Activated B cell treated with CpG ODN at 0.5 μM for 24 hours (primary cell): ENCODE measurements at regions of chr22 and their contacts with region 1.

Region 1: GRCh38 chr22:37199103-37199759 is 11.2 kb upstream of the C1QTNF6 start:
- DNase-seq: peak; percentile 99
- ATAC-seq: peak; percentile 97
- H3K4me3 Mint-ChIP-seq: peak overlapping the region; percentile 87
- H3K27ac Mint-ChIP-seq: peak overlapping the region; percentile 94
- H3K4me1 Mint-ChIP-seq: peaks cover 28% of the 10 kb centered on the region
- H3K27me3 Mint-ChIP-seq: no peaks in the 10 kb centered on the region
- CTCF ChIP-seq: peak; percentile 22

Region 2: DNA sequence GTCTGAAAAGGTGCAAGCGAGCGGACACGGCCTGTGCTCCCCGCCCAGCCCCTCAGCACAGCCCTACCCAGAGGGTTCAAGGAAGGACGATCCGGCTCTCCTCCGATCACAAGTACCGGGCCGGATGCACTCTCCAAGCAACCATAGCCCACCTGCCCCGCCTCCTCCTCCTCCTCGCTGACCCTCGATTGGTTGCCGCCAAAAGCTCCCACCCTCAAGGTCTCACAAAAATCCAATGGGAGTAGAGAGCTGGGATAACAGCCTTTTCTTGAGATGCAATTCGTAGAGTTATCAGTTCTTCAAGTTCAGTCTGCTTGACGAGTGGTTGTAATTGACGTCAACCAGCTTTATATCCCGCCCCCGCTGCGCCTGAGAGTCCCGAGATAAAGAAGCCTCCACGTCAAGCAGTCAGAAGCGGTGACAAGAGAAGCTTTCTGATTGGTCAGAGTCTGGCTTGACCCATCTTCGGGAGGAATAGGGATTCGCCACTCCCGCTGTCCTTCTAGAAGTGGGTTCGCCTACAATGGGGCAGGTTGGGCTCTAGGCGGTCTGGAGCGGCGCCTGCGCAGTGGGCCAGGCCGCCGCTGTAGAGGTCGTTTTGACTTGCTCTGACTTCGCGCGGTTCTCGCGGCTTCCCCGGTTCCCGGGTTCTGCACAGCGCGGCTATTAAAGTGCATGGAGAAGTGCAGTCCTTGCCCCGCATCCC is 423.1 kb before region 1 on chr22 and contains the start of gene IFT27:
- CTCF ChIA-PET with region 1: interaction called, 5 read pairs
- POLR2A ChIA-PET with region 1: no interaction called
- intact Hi-C with region 1: loop called (anchors 1 kb)
- DNase-seq: peak; percentile 81
- ATAC-seq: peak; percentile 89
- H3K4me3 Mint-ChIP-seq: peak within 1 kb of the TSS; percentile 88
- H3K27ac Mint-ChIP-seq: peak within 1 kb of the TSS; percentile 89
- H3K4me1 Mint-ChIP-seq: peaks cover 14% of the 10 kb centered on the region
- H3K27me3 Mint-ChIP-seq: no peaks in the 10 kb centered on the region
- CTCF ChIP-seq: no peak
- total RNA-seq, gene IFT27: 26.2 and 32.7 TPM in 2 replicates

Region 3: DNA sequence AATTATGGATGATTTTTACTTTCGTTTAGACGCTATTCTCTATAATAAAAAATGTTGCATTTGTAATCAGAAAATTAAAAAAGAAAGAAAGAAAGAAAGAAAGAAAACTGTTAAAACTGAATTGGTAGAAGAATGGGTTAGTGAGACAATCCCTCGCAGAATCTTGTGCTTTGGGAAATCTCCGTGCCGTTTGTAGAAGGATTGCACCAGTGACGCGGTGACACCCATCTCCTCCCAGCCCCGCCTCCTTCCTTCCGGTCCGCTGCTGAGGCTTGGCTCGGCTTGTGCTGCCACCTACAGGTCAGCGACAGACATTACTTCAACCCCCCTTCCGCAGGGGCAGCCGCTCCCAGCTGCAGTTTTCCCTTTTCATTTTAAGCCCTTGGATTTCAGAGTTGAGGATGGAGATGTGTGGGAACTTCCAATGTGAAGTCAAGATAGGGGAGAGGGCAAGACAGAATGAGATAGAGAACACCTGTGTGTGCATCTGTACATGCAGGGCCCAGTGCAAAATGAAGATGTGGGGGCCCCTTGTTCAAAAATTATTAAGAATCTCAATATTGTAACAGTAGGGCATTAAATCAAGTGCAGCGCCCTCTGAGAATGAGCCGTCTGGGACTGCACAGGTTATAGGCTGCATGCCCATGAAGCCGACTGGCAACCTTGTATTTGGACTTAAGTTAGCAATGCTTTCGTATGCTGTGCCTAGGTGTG is 221.1 kb before region 1 on chr22:
- CTCF ChIA-PET with region 1: interaction called, 4 read pairs
- POLR2A ChIA-PET with region 1: no interaction called
- intact Hi-C with region 1: loop called (anchors 1 kb)
- DNase-seq: peak; percentile 80
- ATAC-seq: peak; percentile 85
- H3K4me3 Mint-ChIP-seq: peak overlapping the region; percentile 90
- H3K27ac Mint-ChIP-seq: peak overlapping the region; percentile 93
- H3K4me1 Mint-ChIP-seq: peaks cover 12% of the 10 kb centered on the region
- H3K27me3 Mint-ChIP-seq: peaks cover 11% of the 10 kb centered on the region
- CTCF ChIP-seq: peak; percentile 92

Region 4: DNA sequence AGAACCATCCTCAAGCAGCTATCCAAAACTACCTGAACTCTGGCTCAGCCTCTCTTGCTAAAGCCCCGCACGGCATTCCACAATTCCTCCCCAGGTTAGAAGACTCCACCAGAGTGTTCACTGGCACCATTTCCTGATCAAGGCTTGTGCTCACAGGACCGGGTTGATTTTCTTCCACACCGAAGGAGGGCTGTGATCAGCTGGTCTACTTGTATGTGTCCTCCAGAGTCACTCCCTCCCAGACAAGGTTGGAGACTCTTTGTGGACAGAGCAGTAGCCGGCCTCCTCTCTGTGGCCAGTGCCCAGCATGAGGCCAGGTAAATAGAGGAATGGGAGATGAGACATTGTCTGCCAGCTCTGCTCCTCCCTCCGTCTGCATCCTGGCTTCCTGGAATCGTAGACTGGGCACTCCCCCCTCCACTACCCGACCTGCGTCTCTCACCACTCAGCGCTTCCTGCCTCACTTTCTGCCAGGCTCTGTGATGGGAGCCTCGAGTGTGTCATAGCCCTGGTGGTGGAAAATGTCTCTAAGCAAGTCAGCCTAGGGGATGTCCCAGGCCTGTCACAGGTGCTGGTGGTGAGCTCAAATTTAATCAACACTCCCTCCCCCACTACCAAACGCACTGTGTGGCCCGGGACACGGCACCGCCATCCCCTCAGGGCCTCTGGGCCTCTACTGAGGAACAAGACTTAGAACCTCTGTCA is 77.2 kb before region 1 on chr22:
- CTCF ChIA-PET with region 1: interaction called, 7 read pairs
- POLR2A ChIA-PET with region 1: interaction called, 23 read pairs
- intact Hi-C with region 1: loop called (anchors 1 kb)
- DNase-seq: peak; percentile 62
- ATAC-seq: peak; percentile 92
- H3K4me3 Mint-ChIP-seq: peak overlapping the region; percentile 76
- H3K27ac Mint-ChIP-seq: peak overlapping the region; percentile 94
- H3K4me1 Mint-ChIP-seq: peaks cover 44% of the 10 kb centered on the region
- H3K27me3 Mint-ChIP-seq: no peaks in the 10 kb centered on the region
- CTCF ChIP-seq: no peak

Region 5: GRCh38 chr22:37218771-37219411 is 19.7 kb after region 1 on chr22:
- CTCF ChIA-PET with region 1: interaction called, 18 read pairs
- POLR2A ChIA-PET with region 1: interaction called, 54 read pairs
- intact Hi-C with region 1: loop called (anchors 1 kb)
- DNase-seq: no peak
- ATAC-seq: peak; percentile 83
- H3K4me3 Mint-ChIP-seq: peak overlapping the region; percentile 71
- H3K27ac Mint-ChIP-seq: peak overlapping the region; percentile 99
- H3K4me1 Mint-ChIP-seq: peaks cover 78% of the 10 kb centered on the region
- H3K27me3 Mint-ChIP-seq: no peaks in the 10 kb centered on the region
- CTCF ChIP-seq: no peak

Region 6: GRCh38 chr22:37244114-37244921 is 45.1 kb after region 1 on chr22 and contains the start of gene RAC2:
- CTCF ChIA-PET with region 1: interaction called, 48 read pairs
- POLR2A ChIA-PET with region 1: interaction called, 98 read pairs
- intact Hi-C with region 1: loop called (anchors 1 kb)
- DNase-seq: peak; percentile 77
- ATAC-seq: peak; percentile 59
- H3K4me3 Mint-ChIP-seq: peak within 1 kb of the TSS; percentile 97
- H3K27ac Mint-ChIP-seq: peak within 1 kb of the TSS; percentile 90
- H3K4me1 Mint-ChIP-seq: peaks cover 74% of the 10 kb centered on the region
- H3K27me3 Mint-ChIP-seq: no peaks in the 10 kb centered on the region
- CTCF ChIP-seq: no peak
- total RNA-seq, gene RAC2: 518 and 557 TPM in 2 replicates

Region 7: DNA sequence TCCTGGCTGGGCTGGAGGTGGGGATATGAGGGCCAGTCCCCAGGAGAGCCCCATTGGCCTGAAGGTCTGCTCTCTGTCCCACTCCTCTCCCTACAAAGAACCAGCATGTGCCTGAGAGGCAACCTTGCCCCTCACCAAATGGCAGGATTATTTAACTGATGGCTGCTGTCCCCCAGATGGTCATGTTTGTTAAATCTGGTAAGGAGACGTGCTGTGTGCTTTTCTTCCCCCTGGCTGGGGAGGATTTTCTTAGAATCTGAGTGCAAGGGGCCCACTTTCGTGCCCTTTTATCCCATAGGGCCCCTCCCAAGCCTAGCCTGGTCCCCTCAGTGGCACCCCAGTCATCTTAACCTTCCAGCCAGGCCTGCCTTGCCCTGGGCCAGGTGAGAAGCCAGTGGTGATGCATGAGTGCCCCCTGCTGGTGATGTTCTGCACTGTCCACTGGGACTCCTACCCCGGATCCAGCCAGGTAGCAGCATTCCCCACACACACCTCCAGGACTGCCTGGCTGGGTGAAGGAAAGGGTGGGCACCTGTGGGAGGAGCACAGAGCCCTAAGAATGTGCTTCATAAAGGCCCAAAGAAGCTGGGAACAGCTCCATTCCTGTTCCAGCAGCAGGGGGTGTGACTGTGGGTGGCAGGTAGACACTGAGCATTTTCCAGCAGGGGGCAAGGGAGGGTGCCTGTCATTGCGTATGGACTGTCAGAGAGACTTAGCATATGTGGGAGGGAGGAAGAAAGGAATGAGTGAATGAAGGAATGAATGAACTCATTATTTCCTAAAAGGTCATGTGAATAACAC is 258.1 kb after region 1 on chr22:
- CTCF ChIA-PET with region 1: interaction called, 3 read pairs
- POLR2A ChIA-PET with region 1: no interaction called
- intact Hi-C with region 1: loop called (anchors 10 kb)
- DNase-seq: peak; percentile 71
- ATAC-seq: peak; percentile 95
- H3K4me3 Mint-ChIP-seq: no peak overlapping the region
- H3K27ac Mint-ChIP-seq: no peak overlapping the region
- H3K4me1 Mint-ChIP-seq: no peaks in the 10 kb centered on the region
- H3K27me3 Mint-ChIP-seq: no peaks in the 10 kb centered on the region
- CTCF ChIP-seq: peak; percentile 42

Region 8: DNA sequence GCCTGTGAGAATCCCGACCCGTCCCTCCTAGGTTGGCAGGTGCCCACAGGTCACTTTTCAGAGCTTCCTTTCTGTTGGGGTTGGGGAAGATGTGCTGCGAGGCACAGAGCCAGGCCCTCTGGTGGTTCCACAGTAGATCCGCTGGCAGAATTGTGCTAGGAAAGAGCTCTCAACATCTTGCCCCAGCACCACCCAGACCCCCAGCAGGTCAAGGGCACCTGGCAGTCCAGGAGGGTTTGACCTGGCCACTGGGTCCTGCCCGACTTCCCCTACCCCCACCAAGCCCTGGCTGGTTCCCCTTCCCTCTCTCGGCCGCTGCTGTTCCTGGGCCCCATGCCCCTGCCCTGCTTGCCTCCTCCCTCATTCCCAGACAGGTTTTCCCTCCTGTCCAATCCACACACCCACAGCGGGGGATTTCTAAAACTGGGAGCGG is 582.3 kb after region 1 on chr22:
- CTCF ChIA-PET with region 1: no interaction called
- POLR2A ChIA-PET with region 1: no interaction called
- intact Hi-C with region 1: no loop called
- DNase-seq: no peak
- ATAC-seq: no peak
- H3K4me3 Mint-ChIP-seq: no peak overlapping the region
- H3K27ac Mint-ChIP-seq: no peak overlapping the region
- H3K4me1 Mint-ChIP-seq: peaks cover 9% of the 10 kb centered on the region
- H3K27me3 Mint-ChIP-seq: peaks cover 4% of the 10 kb centered on the region
- CTCF ChIP-seq: no peak